GM12878 (cell line): ENCODE measurements at regions of chr2 and their contacts with region 1.

Region 1: DNA sequence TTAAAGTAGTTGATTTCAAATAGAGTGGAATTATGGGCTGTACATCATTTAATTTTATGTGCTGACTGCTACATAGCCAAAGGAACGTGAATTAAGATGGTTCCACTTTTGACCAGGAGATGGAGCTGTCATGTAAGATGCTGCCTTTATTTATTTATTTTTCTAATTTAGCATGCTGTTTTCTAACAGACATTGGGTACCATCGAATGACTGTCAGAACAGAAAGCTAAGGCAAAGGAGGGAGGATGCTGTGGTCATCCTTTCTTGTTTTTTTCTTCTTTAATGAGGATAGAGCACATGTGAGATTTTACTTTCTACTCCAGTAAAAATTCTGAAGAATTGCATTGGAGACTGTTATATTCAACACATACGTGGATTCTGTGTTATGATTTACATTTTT is at the start of gene SCN2A:
- DNase-seq: no peak
- ATAC-seq: peak; percentile 60; the same call in 2 of the 3 replicates
- H3K4me3 ChIP-seq: no peak within 1 kb of the TSS
- H3K27ac ChIP-seq: no peak within 1 kb of the TSS
- H3K4me1 ChIP-seq: no peaks in the 10 kb centered on the region
- H3K27me3 ChIP-seq: no peaks in the 10 kb centered on the region
- CTCF ChIP-seq: peak; percentile 42 to 54 (median 45); a peak in 4 of 6 replicates
- EP300 ChIP-seq: no peak
- POLR2A ChIP-seq: no peak
- RAD21 ChIP-seq: peak; percentile 53; the same call in 1 of the 2 replicates
- polyA plus RNA-seq, gene SCN2A: not detected

Region 2: GRCh38 chr2:165283342-165283741 is 44.1 kb after region 1 on chr2:
- CTCF ChIA-PET with region 1: interaction called, 10 read pairs
- POLR2A ChIA-PET with region 1: no interaction called
- RAD21 ChIA-PET with region 1: interaction called, 3 read pairs
- SMC1A ChIA-PET with region 1: interaction called, 4 read pairs
- in situ Hi-C with region 1: no loop called
- intact Hi-C with region 1: no loop called
- DNase-seq: no peak
- ATAC-seq: no peak
- H3K4me3 ChIP-seq: no peak overlapping the region
- H3K27ac ChIP-seq: no peak overlapping the region
- H3K4me1 ChIP-seq: no peaks in the 10 kb centered on the region
- H3K27me3 ChIP-seq: no peaks in the 10 kb centered on the region
- CTCF ChIP-seq: no peak
- EP300 ChIP-seq: no peak
- POLR2A ChIP-seq: no peak
- RAD21 ChIP-seq: no peak

Region 3: GRCh38 chr2:165293440-165294353 is 54.5 kb after region 1 on chr2:
- CTCF ChIA-PET with region 1: interaction called, 19 read pairs
- POLR2A ChIA-PET with region 1: no interaction called
- RAD21 ChIA-PET with region 1: interaction called, 4 read pairs
- SMC1A ChIA-PET with region 1: interaction called, 17 read pairs
- in situ Hi-C with region 1: no loop called
- intact Hi-C with region 1: loop called (anchors 2 kb)
- DNase-seq: peak; percentile 56
- ATAC-seq: peak; percentile 100
- H3K4me3 ChIP-seq: no peak overlapping the region
- H3K27ac ChIP-seq: no peak overlapping the region
- H3K4me1 ChIP-seq: no peaks in the 10 kb centered on the region
- H3K27me3 ChIP-seq: no peaks in the 10 kb centered on the region
- CTCF ChIP-seq: peak; percentile 73 to 80 (median 79)
- EP300 ChIP-seq: no peak
- POLR2A ChIP-seq: no peak
- RAD21 ChIP-seq: peak; percentile 56; the same call in 1 of the 2 replicates

Region 4: DNA sequence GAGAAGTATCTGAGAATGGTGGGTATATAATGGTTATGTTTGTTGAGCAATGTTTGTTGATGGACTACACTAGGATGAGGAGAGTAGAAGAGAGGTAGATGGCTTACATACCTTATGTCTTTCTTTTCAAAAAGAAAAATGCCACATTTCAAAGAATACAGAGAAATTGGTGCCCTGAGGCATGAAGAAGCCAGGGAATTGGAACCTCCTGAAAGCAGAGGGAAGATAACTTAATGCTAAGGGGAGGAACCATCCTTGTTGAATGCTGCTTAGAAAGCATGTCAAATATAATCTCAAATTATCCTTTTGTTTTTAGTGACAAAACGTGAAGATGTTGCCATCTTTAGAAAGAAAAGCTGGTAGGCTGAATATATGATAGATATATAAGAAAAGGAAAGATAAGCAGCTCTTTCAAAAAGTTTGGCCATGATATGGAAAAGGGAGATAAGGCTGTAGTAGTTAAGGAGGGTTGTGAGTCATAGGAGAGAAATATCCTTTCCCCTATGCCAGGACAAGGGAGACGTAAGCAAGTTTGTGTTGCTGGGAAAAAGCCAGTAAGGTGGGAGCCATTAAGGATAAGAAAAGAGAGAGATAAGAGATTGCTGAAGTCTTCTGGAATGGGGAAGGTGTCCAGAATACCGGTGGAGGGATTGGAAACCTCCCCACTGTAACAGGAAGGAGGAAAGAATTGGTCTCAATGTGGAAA is 66.3 kb after region 1 on chr2:
- CTCF ChIA-PET with region 1: interaction called, 10 read pairs
- POLR2A ChIA-PET with region 1: no interaction called
- RAD21 ChIA-PET with region 1: interaction called, 4 read pairs
- SMC1A ChIA-PET with region 1: interaction called, 5 read pairs
- in situ Hi-C with region 1: no loop called
- intact Hi-C with region 1: no loop called
- DNase-seq: no peak
- ATAC-seq: no peak
- H3K4me3 ChIP-seq: no peak overlapping the region
- H3K27ac ChIP-seq: no peak overlapping the region
- H3K4me1 ChIP-seq: no peaks in the 10 kb centered on the region
- H3K27me3 ChIP-seq: no peaks in the 10 kb centered on the region
- CTCF ChIP-seq: no peak
- EP300 ChIP-seq: no peak
- POLR2A ChIP-seq: no peak
- RAD21 ChIP-seq: no peak

Region 5: DNA sequence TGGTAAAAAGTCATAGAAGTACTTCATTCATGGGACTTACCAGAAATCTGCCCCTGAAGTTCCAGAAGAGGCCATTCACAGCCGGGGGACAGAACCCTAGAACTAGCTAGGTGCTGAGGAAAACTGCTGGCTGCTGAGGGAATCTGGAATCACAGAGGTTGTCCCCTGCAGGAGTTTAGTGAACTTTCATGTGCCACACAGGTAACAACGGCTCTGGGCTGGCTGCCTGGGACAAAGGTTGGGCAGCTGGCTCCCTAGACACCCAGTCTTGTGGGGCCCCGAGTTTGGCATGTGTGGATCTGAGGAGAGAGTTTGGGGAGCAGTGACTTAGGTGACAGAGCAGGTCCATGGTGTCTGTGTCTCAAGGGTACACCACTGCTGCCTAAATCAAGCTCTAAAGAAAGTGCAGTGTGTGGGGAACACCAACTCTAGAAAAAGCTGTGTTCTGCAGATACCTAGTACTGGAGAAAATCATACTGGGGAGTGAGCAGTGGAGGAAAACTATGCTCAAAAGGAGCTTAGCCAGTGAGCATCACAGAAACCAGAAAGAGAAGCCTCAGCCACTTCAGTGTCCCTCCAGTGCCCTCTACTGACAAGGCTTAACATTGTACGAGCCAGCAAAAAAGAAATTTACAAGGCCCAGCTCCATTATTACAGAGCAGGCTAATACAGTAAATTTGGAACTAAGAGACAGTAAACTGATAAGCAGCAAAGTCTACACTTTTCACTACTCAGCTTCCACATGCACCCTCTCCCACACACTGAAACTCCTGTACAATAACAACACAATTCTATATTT is 539.6 kb after region 1 on chr2:
- CTCF ChIA-PET with region 1: interaction called, 6 read pairs
- POLR2A ChIA-PET with region 1: no interaction called
- RAD21 ChIA-PET with region 1: no interaction called
- SMC1A ChIA-PET with region 1: interaction called, 3 read pairs
- in situ Hi-C with region 1: no loop called
- intact Hi-C with region 1: loop called (anchors 5 kb)
- DNase-seq: no peak
- ATAC-seq: peak; percentile 93
- H3K4me3 ChIP-seq: no peak overlapping the region
- H3K27ac ChIP-seq: no peak overlapping the region
- H3K4me1 ChIP-seq: no peaks in the 10 kb centered on the region
- H3K27me3 ChIP-seq: no peaks in the 10 kb centered on the region
- CTCF ChIP-seq: peak; percentile 43 to 50 (median 46); a peak in 5 of 6 replicates
- EP300 ChIP-seq: no peak
- POLR2A ChIP-seq: no peak
- RAD21 ChIP-seq: peak; percentile 50

Region 6: DNA sequence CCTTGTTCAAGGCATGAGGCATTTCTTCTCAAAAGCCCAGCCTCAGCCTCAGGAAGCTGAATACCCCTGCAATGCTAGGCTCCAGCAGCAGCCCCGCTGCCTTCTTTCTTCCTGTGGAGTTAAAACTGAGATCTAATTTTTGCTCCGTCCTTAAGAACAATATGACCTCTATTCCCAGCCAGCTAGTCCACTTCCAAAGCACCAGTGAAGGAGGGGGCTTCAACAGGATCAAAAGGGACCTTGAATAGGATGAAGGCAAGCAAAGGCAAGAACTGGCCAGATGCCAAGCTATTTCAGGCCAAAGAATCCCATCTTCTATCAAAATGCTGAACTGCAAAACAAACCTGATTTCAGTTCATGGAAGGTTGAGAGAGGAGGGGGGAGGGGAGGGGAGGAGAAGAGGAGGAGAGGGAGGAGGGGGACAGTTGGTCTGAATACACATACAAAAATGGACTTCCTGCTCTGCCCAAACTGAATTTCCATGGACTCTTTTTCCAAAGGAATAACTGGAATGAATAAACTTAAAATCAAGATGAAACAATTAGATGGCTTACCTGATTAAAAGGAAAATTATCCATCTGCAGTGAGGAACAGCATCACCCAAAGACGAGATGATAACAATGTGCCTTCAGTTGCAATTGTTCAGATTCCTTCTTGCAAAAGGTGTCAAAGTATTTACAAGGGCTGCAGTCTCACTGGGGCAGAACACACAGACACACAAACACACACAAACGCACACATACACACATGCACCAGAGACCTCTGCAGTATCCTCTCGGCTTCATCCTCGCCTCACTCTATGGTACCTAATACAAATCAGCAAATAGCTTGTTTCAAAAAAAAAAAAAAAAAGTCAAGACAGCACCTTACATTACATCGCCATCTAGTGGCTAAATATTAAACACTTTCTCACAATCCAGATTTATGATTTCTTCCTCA is 888.3 kb after region 1 on chr2 and contains the start of gene SCN1A:
- CTCF ChIA-PET with region 1: interaction called, 4 read pairs
- POLR2A ChIA-PET with region 1: no interaction called
- RAD21 ChIA-PET with region 1: no interaction called
- SMC1A ChIA-PET with region 1: no interaction called
- in situ Hi-C with region 1: no loop called
- intact Hi-C with region 1: loop called (anchors 5 kb)
- DNase-seq: no peak
- ATAC-seq: peak; percentile 48
- H3K4me3 ChIP-seq: no peak within 1 kb of the TSS
- H3K27ac ChIP-seq: no peak within 1 kb of the TSS
- H3K4me1 ChIP-seq: no peaks in the 10 kb centered on the region
- H3K27me3 ChIP-seq: no peaks in the 10 kb centered on the region
- CTCF ChIP-seq: peak; percentile 38 to 64 (median 56); a peak in 5 of 6 replicates
- EP300 ChIP-seq: no peak
- POLR2A ChIP-seq: no peak
- RAD21 ChIP-seq: peak; percentile 64
- polyA plus RNA-seq, gene SCN1A: not detected